ENCODE measurements at regions of chr2 and their contacts with region 1.

Region 1: DNA sequence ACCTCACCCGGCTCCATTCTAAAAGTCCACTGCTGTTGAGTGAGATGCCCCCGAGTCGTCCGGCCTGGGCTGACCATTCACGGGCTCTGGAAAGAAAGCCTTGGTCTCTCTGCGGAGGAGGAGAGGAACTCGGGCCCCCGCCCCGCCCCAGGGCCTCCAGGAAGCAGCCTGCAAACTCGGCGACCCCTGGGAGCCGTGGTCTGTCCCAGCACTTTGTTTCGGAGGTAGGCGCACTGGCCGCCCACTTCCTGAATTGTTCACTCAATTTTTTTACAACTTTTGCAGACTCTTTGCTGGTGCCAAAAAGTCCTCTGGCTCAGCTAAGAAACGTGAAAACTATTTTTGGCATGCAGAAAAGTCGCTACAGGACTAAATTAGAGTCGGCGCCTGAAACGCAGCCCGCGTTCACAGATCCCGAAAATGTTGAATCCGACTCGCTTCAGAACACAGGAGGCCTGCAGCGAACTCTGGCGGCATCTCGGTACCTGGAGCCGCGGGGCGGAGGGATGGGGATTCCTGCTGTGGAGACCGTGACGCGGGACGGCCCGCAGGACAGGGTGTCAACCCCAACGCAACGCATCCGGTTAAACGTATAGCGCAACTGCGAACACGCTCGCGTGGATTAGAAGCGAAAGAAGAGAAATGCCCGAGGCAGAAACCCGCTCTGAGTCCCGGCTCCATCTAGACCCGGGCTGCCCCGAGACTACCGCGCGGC is 1.5 kb downstream of the PXDN start:
- DNase-seq: peak; percentile 74
- H3K4me3 ChIP-seq: peak overlapping the region; percentile 35
- H3K27ac ChIP-seq: peak overlapping the region; percentile 67
- H3K4me1 ChIP-seq: no peaks in the 10 kb centered on the region
- H3K27me3 ChIP-seq: peaks cover 10% of the 10 kb centered on the region
- CTCF ChIP-seq: no peak

Region 2: DNA sequence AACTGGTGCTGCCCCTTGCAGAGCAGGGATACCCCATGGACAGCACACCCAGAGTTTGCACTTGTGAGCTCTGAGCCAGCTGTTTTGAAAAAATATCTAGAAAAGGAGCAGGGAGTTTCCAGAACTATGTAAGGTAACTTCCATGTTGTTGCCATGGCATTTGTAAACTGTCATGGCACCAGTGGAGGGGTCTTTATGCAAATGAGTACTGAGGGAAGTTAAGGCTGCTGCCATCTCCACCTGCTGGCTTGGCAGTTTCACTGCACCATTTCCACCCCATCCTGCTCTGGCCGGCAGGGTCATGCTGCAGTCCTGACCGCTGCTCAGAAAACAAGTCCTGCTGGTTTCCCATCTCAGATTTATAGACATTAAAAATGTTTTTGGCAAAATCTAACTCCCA is 844.5 kb before region 1 on chr2:
- intact Hi-C with region 1: no loop called
- DNase-seq: no peak
- H3K4me3 ChIP-seq: no peak overlapping the region
- H3K27ac ChIP-seq: no peak overlapping the region
- H3K4me1 ChIP-seq: no peaks in the 10 kb centered on the region
- H3K27me3 ChIP-seq: no peaks in the 10 kb centered on the region
- CTCF ChIP-seq: no peak

Region 3: DNA sequence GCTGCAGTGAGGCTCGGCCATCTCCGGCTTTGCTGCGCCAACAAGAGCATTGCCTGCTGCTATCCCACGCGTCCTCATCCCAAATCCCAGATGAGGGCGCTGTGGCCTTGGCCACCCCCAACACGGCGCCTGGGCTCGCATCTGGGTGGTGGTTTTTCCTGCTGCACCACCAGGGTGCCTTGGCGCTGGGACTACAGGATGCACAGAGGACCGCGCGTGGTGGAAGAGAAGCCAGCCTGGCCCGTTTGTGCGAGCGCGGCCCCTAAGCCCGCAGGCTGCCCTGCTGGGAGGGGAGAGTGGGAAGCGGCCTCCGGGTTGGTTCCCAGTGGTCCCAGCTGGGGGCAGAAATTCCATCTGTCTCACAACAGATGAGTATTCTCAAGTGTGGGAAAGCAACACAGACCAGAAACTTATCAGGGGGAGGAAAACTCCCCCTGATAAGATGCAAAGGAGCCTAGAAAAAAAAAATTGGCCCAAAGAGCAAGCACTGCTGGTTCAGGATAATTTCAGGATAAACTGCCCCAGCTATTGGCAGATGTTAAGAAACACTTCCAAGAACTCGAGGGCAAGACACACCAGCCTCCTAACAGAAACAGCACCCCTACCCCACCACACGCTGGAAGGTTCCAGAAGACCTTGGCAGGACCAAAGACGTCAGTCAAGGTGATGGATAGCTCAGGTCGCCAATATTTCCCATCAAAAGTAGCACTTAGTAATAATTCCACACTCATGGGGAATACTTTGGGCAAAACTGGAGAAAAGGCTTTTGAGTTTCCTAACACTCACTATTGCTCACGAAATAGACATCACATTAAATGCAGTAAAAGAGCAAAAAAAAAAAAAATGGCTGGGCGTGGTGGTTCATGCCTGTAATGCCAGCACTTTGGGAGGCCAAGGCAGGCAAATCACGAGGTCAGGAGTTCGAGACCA is 150.6 kb before region 1 on chr2:
- intact Hi-C with region 1: loop called (anchors 5 kb)
- DNase-seq: peak; percentile 68
- H3K4me3 ChIP-seq: no peak overlapping the region
- H3K27ac ChIP-seq: no peak overlapping the region
- H3K4me1 ChIP-seq: peaks cover 3% of the 10 kb centered on the region
- H3K27me3 ChIP-seq: no peaks in the 10 kb centered on the region
- CTCF ChIP-seq: peak; percentile 50

Region 4: GRCh38 chr2:1675633-1676032 is 67.2 kb before region 1 on chr2:
- intact Hi-C with region 1: loop called (anchors 10 kb)
- DNase-seq: no peak
- H3K4me3 ChIP-seq: no peak overlapping the region
- H3K27ac ChIP-seq: no peak overlapping the region
- H3K4me1 ChIP-seq: no peaks in the 10 kb centered on the region
- H3K27me3 ChIP-seq: no peaks in the 10 kb centered on the region
- CTCF ChIP-seq: no peak

Region 5: DNA sequence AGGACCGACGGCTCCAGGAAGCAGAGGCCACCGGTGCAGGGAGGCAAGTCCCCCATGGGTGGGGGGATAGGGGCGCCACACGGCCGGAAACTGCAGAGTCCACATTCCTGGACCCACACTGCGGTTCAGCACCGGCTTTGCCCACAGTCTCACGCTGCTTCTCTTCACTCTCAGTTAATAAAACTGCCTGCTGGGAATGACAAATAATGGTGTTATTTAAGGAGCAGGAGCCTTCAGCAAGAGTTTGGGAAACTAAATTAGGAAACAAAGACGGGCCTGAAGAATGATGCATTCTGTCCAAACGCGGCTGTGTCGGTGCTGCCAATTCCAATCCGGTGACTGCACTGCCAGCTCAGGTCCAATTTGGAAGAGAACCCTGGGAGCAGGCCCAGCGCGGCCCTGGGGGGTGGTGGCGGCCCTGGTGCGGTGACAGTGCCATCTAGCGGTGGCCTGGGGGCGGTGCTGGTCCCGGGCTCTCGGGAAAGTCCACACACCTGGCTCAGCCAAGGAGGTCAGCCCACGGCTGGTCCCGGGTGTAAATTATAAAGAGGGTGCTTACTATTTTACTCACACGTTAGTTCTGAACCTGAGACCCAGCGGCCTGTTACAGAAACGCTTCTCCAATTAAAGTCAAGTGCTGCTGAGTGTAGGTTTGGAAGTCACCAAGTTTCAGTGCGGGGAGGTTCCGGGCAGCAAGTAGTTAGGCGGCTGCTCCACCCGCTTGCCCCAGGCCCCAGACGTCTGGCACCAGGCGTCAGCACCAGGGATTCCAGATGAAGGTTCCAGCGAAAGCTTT is 74.6 kb after region 1 on chr2:
- intact Hi-C with region 1: loop called (anchors 10 kb)
- DNase-seq: peak; percentile 65
- H3K4me3 ChIP-seq: no peak overlapping the region
- H3K27ac ChIP-seq: peak overlapping the region; percentile 53
- H3K4me1 ChIP-seq: no peaks in the 10 kb centered on the region
- H3K27me3 ChIP-seq: no peaks in the 10 kb centered on the region
- CTCF ChIP-seq: peak; percentile 92

Measured in colonic mucosa (tissue), 4 donors.